Activated CD8-positive, alpha-beta T cell treated with anti-CD3 and anti-CD28 coated beads, Interleukin-2, amount 10 ng/mL, durations not matched to agents 7 days and 5 days (primary cell): ENCODE measurements at regions of chr16 and their contacts with region 1.

Region 1: DNA sequence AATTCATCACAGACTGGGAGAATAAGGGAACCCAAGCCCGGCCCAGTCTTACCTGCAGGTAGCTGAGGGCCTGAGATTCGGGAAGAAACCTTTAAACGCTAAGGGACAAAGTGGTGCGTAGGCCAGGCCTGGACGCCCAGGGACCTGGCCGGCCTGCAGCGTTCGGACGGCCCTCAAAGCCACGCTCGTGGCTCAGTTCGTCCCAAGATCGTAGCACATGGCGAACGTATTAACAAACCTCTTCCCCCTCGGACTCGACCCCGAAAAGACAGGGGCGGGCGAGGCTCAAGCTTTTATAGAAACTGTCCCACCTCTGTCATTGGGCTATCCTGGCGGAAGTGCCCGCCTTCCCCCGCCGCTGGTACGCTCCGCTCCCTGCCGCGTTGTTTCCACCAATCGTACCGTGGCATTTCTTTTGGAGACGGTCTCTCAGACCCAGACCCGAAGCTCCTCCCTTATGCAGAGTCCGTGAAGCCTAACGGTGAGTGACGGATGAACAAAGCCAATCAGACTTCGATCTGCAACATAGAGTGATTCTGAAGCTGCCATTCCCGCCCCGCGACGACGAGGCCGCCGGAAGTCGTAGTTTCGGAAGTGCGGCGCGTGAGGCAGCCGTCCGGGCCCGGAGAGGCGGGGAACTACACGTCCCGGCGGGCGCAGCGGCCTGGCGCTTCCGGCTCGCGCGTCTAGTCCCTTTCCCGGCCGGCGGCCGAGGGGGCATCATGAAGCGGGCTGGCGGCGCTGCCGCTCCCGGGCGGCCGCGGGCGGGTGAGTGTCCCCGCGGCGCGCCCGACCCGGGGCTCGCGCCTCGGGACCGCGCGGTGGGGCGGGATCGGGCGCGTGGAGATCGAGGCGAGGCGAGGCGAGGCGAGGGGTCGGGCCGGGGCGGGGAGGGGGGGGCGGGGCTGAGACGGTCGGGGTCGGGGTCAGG is at the start of gene TRAF7:
- DNase-seq: peak; percentile 99
- ATAC-seq: peak; percentile 93
- H3K4me3 Mint-ChIP-seq: peak within 1 kb of the TSS; percentile 97
- H3K27ac Mint-ChIP-seq: peak within 1 kb of the TSS; percentile 93
- H3K4me1 Mint-ChIP-seq: peaks cover 47% of the 10 kb centered on the region
- H3K27me3 Mint-ChIP-seq: no peaks in the 10 kb centered on the region
- total RNA-seq, gene TRAF7: 56.8 to 59.5 TPM

Region 2: GRCh38 chr16:1991948-1992703 is 163.2 kb before region 1 on chr16:
- CTCF ChIA-PET with region 1: interaction called, 4 read pairs
- POLR2A ChIA-PET with region 1: interaction called, 12 read pairs
- DNase-seq: peak; percentile 97
- ATAC-seq: peak; percentile 78
- H3K4me3 Mint-ChIP-seq: peak overlapping the region; percentile 69
- H3K27ac Mint-ChIP-seq: no peak overlapping the region
- H3K4me1 Mint-ChIP-seq: peaks cover 30% of the 10 kb centered on the region
- H3K27me3 Mint-ChIP-seq: peaks cover 10% of the 10 kb centered on the region

Region 3: DNA sequence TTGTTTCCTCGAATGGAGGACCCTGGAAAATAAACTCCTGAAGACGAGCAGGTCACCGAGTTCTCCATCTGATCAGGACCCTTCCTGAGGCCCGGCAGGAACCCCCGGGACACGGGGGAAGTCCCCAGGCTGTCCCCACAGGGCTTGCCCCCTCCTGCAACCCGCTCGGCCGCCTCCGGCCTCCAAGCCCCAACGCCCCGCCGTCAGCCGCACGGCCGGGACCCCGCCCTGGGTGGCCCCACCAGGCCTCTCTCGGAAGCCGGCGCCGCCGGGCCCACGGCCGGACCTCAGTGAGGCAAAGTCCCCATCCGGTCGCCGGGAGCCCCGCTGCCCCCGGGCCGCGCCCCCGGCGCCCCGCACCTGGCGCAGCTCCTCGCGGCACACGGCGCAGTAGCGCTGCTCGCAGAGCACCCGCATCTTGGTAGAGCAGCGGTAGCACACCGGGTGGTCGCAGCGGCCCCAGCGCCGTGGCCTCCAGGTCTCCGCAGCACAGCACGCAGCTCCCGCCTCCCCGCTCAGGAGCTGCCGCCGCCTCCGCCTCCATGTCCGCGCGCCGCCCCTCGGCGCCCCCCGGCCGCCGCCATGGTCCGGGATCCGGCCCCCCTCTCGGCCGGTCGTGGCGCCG is 146.1 kb before region 1 on chr16:
- CTCF ChIA-PET with region 1: interaction called, 14 read pairs
- POLR2A ChIA-PET with region 1: interaction called, 16 read pairs
- DNase-seq: peak; percentile 33
- ATAC-seq: peak; percentile 59
- H3K4me3 Mint-ChIP-seq: peak overlapping the region; percentile 84
- H3K27ac Mint-ChIP-seq: peak overlapping the region; percentile 88
- H3K4me1 Mint-ChIP-seq: peaks cover 37% of the 10 kb centered on the region
- H3K27me3 Mint-ChIP-seq: no peaks in the 10 kb centered on the region

Region 4: DNA sequence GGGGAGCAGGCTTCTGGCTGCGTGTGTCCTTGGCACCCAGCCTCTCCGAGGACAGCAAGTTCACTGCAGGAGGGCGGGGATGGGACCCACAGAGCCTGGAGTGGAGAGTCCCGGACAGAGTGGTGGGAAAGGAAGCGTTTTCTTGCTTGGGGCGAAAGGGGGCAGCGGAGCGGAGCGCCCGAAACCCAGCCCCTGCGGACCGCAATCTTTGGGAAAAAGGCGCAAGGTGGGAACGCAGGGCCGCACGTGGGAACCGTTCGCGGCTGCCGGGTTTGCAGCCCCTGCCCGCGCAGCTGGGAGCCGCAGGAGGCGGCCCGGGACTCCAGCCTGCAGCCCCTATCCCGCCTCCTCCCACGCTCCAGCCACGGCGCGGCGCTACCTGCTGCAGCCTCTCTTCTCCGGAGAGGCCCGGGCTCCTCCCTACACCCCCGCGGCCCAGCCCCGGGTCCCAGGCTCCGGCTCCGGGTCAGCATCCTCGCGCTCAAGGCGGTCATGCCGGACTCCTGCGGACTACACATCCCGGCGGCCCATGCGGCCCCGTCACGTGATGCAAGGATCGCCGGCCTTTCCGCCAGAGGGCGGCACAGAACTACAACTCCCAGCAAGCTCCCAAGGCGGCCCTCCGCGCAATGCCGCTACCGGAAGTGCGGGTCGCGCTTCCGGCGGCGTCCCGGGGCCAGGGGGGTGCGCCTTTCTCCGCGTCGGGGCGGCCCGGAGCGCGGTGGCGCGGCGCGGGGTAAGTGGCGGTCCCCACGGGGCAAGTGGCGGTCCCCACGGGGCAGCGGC is 107.8 kb before region 1 on chr16 and contains the starts of genes NTHL1 and TSC2:
- CTCF ChIA-PET with region 1: interaction called, 12 read pairs
- POLR2A ChIA-PET with region 1: interaction called, 14 read pairs
- DNase-seq: peak; percentile 97
- ATAC-seq: peak; percentile 93
- H3K4me3 Mint-ChIP-seq: peak within 1 kb of the TSS; percentile 94
- H3K27ac Mint-ChIP-seq: peak within 1 kb of the TSS; percentile 86
- H3K4me1 Mint-ChIP-seq: peaks cover 22% of the 10 kb centered on the region
- H3K27me3 Mint-ChIP-seq: no peaks in the 10 kb centered on the region
- total RNA-seq, gene NTHL1: 29.9 to 35.3 TPM
- total RNA-seq, gene TSC2: 87.9 to 97.4 TPM

Region 5: DNA sequence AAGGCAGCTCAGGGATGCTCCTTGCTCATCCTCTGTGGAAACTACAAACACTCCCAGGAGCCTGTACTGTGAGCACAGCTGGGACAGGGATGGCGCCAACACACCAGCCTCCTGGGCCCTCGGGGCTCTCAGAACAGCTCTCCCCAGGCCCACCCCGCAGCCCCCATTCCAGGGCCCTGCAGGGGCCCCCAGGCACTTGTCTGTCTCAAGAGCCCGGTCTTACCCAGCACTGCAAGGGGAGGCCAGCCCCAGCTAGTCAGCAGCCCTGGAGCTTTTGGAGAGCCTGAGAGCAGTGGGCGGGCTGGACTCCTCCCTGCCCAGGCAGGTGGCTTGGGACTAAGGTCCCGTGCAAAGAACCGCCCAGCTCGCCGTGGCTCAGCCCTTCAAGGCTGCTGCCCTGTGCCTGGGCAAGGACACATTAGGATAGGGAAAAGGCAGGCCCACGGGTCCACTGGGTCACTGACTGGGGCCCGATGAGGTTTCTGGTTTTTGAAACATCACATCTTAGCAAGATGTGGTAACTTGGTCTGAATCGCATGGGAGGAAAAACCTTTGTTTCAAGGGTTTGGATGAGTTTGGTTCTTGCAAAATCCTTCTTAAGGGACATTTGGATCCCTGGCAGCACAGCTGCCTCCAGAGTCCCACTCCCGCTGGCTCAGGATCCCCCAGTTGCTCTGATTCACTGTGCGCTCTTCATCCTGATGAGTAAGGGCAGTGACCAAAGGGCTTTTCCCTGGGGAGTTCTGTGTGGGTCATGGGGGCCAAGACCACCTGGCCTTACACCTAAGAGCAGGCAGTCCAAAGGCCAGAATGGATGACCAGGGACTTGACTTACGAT is 83.7 kb after region 1 on chr16:
- CTCF ChIA-PET with region 1: no interaction called
- POLR2A ChIA-PET with region 1: no interaction called
- DNase-seq: no peak
- ATAC-seq: peak; percentile 14
- H3K4me3 Mint-ChIP-seq: no peak overlapping the region
- H3K27ac Mint-ChIP-seq: no peak overlapping the region
- H3K4me1 Mint-ChIP-seq: peaks cover 2% of the 10 kb centered on the region
- H3K27me3 Mint-ChIP-seq: no peaks in the 10 kb centered on the region

Region 6: DNA sequence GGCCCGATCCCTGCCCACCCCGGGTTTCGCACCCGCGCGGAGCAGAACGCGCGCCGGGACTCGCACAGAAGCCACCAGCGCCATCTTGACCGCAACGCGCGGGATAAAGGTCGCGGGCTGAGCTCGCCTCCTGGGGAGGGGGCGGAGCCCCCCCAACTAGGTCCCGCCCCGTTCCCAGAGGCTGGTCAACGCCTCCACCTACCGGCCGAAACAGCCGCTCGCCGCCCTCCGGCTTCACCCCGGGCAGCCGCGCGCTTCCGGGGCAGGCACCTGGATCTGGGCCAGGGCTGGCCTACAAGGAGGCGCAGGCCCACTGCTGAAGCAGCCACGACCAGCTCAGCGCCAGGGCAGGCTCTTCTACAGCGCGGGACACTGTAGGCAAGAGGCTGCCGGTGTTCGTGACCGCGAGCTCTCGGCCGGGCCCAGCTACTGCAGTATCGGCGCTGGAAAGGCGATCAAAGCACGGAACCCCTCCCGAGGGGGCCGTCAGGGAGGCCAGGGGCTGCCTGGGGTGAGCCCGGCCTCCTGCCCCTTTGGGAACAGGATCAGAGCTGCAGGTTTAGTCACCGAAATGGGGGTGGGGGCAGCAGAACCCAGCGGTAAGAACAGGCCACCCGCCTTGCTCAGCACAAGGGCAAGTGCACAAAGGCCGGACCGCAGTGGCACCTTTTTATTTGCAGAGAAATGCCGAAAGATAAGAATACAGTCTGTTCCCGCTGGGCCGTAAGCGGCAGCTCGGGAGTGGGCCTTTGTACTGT is 96.3 kb after region 1 on chr16 and contains the start of gene ECI1:
- CTCF ChIA-PET with region 1: interaction called, 11 read pairs
- POLR2A ChIA-PET with region 1: interaction called, 11 read pairs
- DNase-seq: peak; percentile 86
- ATAC-seq: peak; percentile 87
- H3K4me3 Mint-ChIP-seq: peak within 1 kb of the TSS; percentile 87
- H3K27ac Mint-ChIP-seq: peak within 1 kb of the TSS; percentile 91
- H3K4me1 Mint-ChIP-seq: peaks cover 5% of the 10 kb centered on the region
- H3K27me3 Mint-ChIP-seq: no peaks in the 10 kb centered on the region
- total RNA-seq, gene ECI1: 36.0 to 41.1 TPM

Region 7: GRCh38 chr16:2278272-2278608 is 122.9 kb after region 1 on chr16:
- CTCF ChIA-PET with region 1: no interaction called
- POLR2A ChIA-PET with region 1: no interaction called
- DNase-seq: no peak
- ATAC-seq: no peak
- H3K4me3 Mint-ChIP-seq: no peak overlapping the region
- H3K27ac Mint-ChIP-seq: no peak overlapping the region
- H3K4me1 Mint-ChIP-seq: no peaks in the 10 kb centered on the region
- H3K27me3 Mint-ChIP-seq: no peaks in the 10 kb centered on the region